ENCODE measurements at regions of chr1 and their contacts with region 1.

Region 1: GRCh38 chr1:155250633-155251449 is 4.4 kb downstream of the ENTREP3 start:
- DNase-seq: peak; percentile 96
- CTCF ChIP-seq: peak; percentile 100

Region 2: DNA sequence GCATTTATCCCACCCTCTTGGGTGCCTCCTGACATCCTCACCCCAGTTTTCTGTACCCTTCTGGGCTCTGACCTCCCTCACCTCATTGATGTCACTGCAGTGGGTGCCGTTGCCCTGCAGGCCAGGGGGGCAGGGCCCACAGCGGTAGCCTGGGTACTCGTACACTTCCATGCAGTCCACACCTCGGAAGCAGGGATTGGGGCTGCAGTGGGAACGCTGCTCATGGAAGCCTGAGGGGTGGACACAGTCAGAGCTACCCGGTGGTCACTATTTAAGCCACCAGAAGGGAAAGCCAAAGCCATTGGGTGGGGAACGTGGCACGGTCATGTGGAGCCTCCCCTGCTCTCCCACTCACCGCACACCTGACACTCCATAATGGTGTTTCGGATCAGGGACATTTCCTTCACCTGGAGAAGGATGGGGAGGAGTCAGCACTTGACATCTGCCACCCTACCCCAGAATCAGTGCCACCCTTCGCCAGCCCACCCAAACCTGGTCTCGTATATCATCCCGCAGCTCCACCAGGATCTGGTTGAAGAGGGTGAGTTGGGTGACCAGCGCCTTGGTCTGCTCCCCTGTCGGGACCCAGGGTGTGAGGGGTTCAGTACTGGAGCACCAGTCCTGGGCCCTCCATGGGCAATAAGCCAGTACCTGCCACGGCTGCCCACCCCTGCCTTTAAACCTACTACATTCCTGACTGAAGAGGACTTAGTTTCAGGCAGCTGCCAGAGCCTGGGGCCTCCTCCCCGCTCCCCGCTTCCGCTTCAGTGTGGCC is 47.9 kb before region 1 on chr1:
- CTCF ChIA-PET with region 1: interaction called, 31 read pairs
- POLR2A ChIA-PET with region 1: no interaction called
- DNase-seq: no peak
- CTCF ChIP-seq: no peak

Region 3: DNA sequence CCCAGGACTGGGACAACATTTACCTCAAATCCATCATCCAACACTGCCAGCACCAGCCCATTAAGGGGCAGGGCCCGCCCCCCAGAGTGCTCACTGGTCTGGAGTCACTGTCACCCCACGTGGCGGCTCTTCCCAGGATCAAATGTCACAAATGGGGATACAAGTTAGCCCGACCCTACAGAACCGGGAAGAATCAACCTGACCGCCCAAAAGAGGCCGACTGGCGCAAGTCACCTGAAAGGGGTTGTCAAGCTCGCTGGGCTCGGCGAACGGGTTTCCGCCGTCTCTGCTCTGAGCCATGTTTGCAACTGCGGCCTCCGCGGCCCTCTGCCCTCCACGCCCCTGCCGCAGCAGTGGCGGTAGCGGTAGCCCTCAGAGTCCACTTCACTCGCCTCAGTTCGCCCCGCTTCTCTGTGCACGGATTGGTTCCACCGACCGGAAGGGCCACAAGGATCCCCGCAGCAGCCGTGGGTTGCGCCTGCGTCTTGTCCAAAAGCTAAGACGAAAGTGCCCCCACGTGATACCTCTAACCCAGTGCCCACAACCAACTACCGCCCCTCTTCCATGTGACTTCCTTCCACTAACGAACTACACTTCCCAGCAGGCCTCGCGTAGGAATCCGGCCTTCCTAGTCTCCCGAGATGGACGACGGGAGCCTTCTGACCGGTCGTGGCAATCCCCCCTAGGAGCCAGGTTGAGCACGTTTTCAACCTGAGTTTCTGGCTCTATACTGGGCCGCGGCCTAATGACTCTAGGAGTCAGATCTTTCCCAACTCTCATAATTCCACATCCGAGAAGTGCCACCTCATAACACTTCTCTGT is 11.2 kb after region 1 on chr1 and contains the start of gene SCAMP3:
- CTCF ChIA-PET with region 1: interaction called, 154 read pairs
- POLR2A ChIA-PET with region 1: interaction called, 11 read pairs
- DNase-seq: peak; percentile 97
- CTCF ChIP-seq: no peak

Region 4: GRCh38 chr1:155308493-155309422 is 57.9 kb after region 1 on chr1 and contains the start of gene FDPS:
- CTCF ChIA-PET with region 1: interaction called, 52 read pairs
- POLR2A ChIA-PET with region 1: no interaction called
- DNase-seq: peak; percentile 98
- CTCF ChIP-seq: no peak

Region 5: GRCh38 chr1:155504207-155504606 is 253.4 kb after region 1 on chr1:
- CTCF ChIA-PET with region 1: interaction called, 19 read pairs
- POLR2A ChIA-PET with region 1: no interaction called
- DNase-seq: peak; percentile 38
- CTCF ChIP-seq: peak; percentile 36